ENCODE measurements at regions of chr1 and their contacts with region 1.

Region 1: GRCh38 chr1:201154389-201155165 is at the start of gene TMEM9:
- DNase-seq: peak; percentile 93
- H3K4me3 Mint-ChIP-seq: peak within 1 kb of the TSS; percentile 78
- H3K27ac Mint-ChIP-seq: peak within 1 kb of the TSS; percentile 65
- H3K4me1 Mint-ChIP-seq: peaks cover 14% of the 10 kb centered on the region
- H3K27me3 Mint-ChIP-seq: peaks cover 18% of the 10 kb centered on the region
- total RNA-seq, gene TMEM9: 14.9 and 16.9 TPM in 2 replicates

Region 2: DNA sequence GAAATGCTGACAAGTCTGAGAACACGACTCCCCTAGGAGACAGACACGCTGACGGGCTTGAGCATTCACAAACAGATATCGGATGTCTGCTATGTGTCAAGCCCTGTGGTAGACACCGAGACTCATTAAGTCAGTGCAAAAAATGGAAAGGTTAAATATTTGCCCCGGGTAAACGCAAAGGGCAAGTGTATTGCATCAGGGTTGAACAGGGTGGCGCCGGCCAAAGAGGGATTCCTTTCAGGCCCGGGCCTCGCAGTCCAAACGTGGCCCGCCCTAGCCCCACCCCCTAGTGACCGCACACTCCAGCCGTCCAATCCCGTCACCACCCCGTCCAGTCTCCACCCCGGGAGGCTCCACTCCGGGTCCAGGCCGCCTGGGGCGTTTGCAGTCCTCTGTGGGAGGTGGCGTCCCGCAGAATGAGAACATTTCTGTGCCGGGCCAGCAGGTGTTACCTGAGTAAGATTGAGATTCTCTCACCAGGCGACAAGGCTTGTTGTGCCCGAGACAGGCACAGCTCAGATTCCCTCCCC is 16.0 kb after region 1 on chr1:
- intact Hi-C with region 1: loop called (anchors 1 kb)
- DNase-seq: peak; percentile 61
- H3K4me3 Mint-ChIP-seq: peak overlapping the region; percentile 73
- H3K27ac Mint-ChIP-seq: peak overlapping the region; percentile 63
- H3K4me1 Mint-ChIP-seq: peaks cover 11% of the 10 kb centered on the region
- H3K27me3 Mint-ChIP-seq: peaks cover 30% of the 10 kb centered on the region